CD4-positive, alpha-beta T cell (primary cell): ENCODE measurements at regions of chr4 and their contacts with region 1.

Region 1: GRCh38 chr4:147103403-147103946 is 157.8 kb upstream of the TTC29 start:
- DNase-seq: no peak
- ATAC-seq: no peak
- H3K4me3 ChIP-seq: no peak overlapping the region
- H3K4me3 Mint-ChIP-seq: no peak overlapping the region
- H3K27ac ChIP-seq: no peak overlapping the region
- H3K27ac Mint-ChIP-seq: no peak overlapping the region
- H3K4me1 ChIP-seq: no peaks in the 10 kb centered on the region
- H3K4me1 Mint-ChIP-seq: no peaks in the 10 kb centered on the region
- H3K27me3 ChIP-seq: peaks cover 0 to 4% of the 10 kb centered on the region in 2 experiments
- H3K27me3 Mint-ChIP-seq: peaks cover 34% of the 10 kb centered on the region
- CTCF ChIP-seq: no peak

Region 2: DNA sequence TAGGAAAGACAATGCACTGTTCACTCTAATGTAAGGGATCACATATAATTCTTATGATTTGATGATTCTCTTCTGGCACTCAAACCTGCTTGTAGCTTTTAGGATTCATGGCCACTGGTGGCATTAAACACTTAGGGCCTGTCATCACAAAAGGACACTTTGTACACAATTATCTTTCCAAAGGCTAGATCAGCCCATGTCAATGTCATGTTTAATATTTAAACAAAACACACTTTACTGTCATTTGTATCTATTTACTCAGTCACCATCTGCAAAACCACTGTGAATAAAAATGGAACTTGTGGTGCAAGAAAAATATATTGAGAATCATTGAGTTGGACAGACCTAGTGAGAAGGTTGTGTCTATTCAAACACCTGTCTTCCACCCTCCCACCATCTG is 74.2 kb before region 1 on chr4:
- CTCF ChIA-PET with region 1: no interaction called
- POLR2A ChIA-PET with region 1: no interaction called
- intact Hi-C with region 1: loop called in 1 of 2 experiments (anchors 5 kb)
- DNase-seq: no peak
- ATAC-seq: no peak
- H3K4me3 ChIP-seq: no peak overlapping the region
- H3K4me3 Mint-ChIP-seq: no peak overlapping the region
- H3K27ac ChIP-seq: no peak overlapping the region
- H3K27ac Mint-ChIP-seq: no peak overlapping the region
- H3K4me1 ChIP-seq: no peaks in the 10 kb centered on the region
- H3K4me1 Mint-ChIP-seq: no peaks in the 10 kb centered on the region
- H3K27me3 ChIP-seq: no peaks in the 10 kb centered on the region
- H3K27me3 Mint-ChIP-seq: peaks cover 9% of the 10 kb centered on the region
- CTCF ChIP-seq: no peak

Region 3: GRCh38 chr4:147056940-147057610 is 46.4 kb before region 1 on chr4:
- CTCF ChIA-PET with region 1: no interaction called
- POLR2A ChIA-PET with region 1: no interaction called
- intact Hi-C with region 1: no loop called
- DNase-seq: peak in 2 of 14 experiments; percentile 14
- ATAC-seq: no peak
- H3K4me3 ChIP-seq: peak overlapping the region; percentile 45
- H3K4me3 Mint-ChIP-seq: peak overlapping the region; percentile 86
- H3K27ac ChIP-seq: no peak overlapping the region
- H3K27ac Mint-ChIP-seq: peak overlapping the region; percentile 60
- H3K4me1 ChIP-seq: no peaks in the 10 kb centered on the region
- H3K4me1 Mint-ChIP-seq: peaks cover 12% of the 10 kb centered on the region
- H3K27me3 ChIP-seq: no peaks in the 10 kb centered on the region
- H3K27me3 Mint-ChIP-seq: peaks cover 4% of the 10 kb centered on the region
- CTCF ChIP-seq: no peak